A673 (cell line): ENCODE measurements at regions of chr12 and their contacts with region 1.

Region 1: DNA sequence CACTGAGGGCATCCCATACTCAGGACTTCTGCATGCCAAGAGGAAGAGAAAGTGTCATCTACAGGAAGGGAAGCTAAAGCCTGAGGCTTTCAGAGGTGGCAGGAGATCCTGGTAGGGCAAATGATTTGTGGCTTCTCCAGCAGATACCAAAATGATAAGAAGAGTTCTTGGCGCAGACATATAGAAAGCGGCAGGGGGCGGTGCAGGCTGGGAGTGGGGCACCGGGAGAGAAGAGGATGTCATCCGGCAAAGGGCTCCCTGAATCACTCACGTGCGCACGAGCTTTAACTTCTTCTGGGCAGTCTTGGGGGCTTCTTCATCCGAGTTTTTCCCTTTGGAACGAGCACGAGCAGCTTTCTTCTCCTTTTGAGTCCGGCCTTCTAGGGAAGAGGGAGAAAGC is 5.2 kb upstream of the ACRBP start:
- DNase-seq: no peak
- H3K4me3 ChIP-seq: no peak overlapping the region
- H3K27ac ChIP-seq: no peak overlapping the region
- H3K4me1 ChIP-seq: no peaks in the 10 kb centered on the region
- H3K27me3 ChIP-seq: no peaks in the 10 kb centered on the region
- CTCF ChIP-seq: no peak

Region 2: GRCh38 chr12:6662906-6663742 is 10.7 kb after region 1 on chr12 and contains the start of gene ING4:
- CTCF ChIA-PET with region 1: no interaction called
- POLR2A ChIA-PET with region 1: interaction called, 10 read pairs
- intact Hi-C with region 1: no loop called
- DNase-seq: peak; percentile 100
- H3K4me3 ChIP-seq: peak within 1 kb of the TSS; percentile 88
- H3K27ac ChIP-seq: peak within 1 kb of the TSS; percentile 94
- H3K4me1 ChIP-seq: peaks cover 11% of the 10 kb centered on the region
- H3K27me3 ChIP-seq: no peaks in the 10 kb centered on the region
- CTCF ChIP-seq: no peak
- total RNA-seq, gene ING4: 21.4 and 25.5 TPM in 2 replicates